KBM-7 (cell line): ENCODE measurements at regions of chr12 and their contacts with region 1.

Region 1: DNA sequence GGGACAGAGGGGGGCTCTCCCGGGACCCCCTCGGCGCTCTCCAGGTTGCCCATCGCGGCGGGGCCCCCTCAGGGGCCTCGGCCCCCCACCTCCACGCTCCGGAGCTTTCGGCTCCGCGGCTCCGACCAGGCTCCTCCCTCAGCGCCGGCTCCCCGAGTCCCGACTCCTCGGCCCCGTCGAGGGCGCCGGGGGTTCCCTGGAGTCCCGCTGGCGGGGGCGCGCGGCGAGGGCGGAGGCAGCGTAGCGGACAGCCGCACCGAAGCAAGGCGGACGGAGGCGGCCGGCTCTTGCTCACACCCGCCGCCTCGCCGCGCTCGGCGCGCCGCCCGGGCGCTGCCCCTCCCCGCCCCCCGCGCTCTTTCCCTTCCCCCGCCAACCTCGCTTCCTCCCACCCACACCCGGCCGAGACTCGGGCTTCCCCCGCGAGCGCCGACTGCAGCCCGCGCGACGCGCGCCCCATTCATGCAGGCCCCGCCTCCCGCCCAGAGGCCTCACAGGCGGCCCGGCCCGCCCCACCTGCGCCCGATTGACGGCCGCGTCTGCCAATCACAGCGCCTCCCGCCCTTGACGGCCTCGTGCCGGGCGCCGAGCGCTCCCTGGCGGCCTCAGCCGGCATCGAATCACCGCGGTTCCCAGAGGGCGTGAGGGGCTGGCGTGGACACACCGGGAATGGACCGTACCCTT is at the start of gene FMNL3:
- DNase-seq: peak; percentile 92

Region 2: DNA sequence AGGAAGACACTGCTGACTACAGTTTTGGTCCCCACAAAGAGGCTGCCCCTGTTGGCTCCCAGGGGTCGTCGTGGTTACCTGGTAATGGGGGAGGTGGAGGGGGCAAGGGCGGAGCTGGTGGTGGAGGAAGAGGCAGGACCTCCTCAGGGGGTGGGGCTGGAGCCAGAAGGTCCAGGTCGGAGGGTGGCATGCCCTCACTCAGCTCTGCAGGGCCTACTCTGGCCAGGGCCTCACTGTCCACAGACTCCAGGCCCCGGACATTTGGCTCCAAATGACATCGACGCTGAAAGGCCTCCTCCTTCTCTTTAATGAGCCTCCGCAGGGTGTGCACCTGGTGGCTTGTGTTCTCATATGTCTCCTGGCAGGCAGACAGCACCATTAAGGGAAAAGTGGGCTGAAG is 55.4 kb before region 1 on chr12:
- in situ Hi-C with region 1: loop called (anchors 10 kb)
- DNase-seq: no peak